Sigmoid colon (tissue), 7 donors: ENCODE measurements at regions of chr11 and their contacts with region 1.

Region 1: DNA sequence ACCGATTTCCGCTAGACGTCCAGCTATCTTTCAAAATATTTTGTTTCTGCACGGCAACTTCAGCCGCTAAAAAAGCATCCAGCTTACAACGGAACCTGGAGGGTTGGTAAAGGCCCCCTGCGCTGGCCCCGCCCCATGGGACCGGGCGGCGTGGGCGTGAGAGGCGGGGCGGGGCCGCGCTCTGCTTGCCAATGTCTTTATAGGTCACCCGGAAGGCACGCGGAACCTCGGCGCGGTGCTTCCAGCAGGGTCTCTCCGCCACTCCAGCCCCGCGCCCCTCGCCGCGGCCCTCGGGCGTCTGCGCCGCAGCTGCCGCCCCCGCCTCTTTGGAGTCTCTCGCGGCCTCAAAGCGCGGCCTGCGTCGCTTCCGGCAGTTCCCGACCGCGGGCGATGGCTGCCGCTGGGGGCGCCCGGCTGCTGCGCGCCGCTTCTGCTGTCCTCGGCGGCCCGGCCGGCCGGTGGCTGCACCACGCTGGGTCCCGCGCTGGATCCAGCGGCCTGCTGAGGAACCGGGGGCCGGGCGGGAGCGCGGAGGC is at the start of gene FDX1:
- DNase-seq: peak; percentile 87
- H3K4me3 ChIP-seq: peak within 1 kb of the TSS; percentile 55 to 80 (median 74)
- H3K27ac ChIP-seq: peak within 1 kb of the TSS; percentile 90 to 93 (median 92)
- H3K4me1 ChIP-seq: peaks cover 0 to 36% (median 26%) of the 10 kb centered on the region in 4 donors
- H3K27me3 ChIP-seq: no peaks in the 10 kb centered on the region
- CTCF ChIP-seq: peak in 2 of 4 experiments; percentile 34 to 71
- EP300 ChIP-seq: no peak
- POLR2A ChIP-seq: no peak
- total RNA-seq, gene FDX1: 12.5 to 13.8 (median 13.5) TPM

Region 2: DNA sequence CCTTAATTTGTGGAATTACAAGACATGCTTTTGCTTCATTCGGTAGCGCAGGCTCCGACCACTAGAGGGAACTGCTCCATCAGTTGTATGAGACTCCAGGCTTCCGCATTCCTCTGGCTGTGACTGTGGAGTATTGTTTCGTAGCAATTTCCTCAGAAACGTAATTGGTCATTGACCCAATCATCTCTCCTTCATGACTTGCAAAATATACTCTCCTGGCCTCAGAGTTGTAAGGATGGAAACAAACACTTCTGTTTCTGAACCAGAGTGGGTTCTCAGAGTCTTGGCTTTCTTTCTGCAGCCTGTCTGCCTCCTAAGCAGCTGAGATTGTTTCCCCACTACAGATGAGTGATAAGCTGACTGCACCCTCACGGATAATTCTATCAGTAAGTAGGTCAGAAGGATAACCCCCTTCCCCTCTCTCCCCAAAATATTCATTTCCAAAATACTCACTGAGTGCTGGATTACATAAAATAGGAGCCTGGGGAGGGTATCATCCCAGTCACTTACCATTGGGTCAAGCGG is 483.4 kb before region 1 on chr11:
- intact Hi-C with region 1: loop called (anchors 5 kb)
- DNase-seq: peak; percentile 89
- H3K4me3 ChIP-seq: peak overlapping the region in 3 of 4 donors; percentile 20 to 38 (median 38)
- H3K27ac ChIP-seq: peak overlapping the region; percentile 54 to 62 (median 58)
- H3K4me1 ChIP-seq: peaks cover 0 to 5% (median 2%) of the 10 kb centered on the region in 4 donors
- H3K27me3 ChIP-seq: no peaks in the 10 kb centered on the region
- CTCF ChIP-seq: peak; percentile 74 to 89 (median 85)
- EP300 ChIP-seq: no peak
- POLR2A ChIP-seq: no peak

Region 3: DNA sequence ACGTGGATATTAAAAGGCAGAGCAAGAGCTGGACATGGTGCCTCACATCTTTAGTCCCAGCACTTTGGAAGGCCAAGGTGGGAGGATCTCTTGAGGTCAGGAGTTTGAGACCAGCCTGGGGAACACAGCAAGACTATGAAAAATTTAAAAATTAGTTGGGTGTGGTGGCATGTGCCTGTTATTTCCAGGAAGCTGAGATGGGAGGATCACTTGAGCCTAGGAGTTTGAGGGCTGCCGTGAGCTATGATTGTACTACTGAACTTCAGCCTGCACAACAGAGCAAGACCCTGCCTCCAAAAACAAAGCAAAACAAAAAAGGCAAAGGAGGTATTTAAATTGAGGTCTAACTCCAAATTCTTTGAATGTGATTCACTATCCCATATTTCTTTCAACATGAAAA is 156.9 kb before region 1 on chr11:
- intact Hi-C with region 1: no loop called
- DNase-seq: no peak
- H3K4me3 ChIP-seq: no peak overlapping the region
- H3K27ac ChIP-seq: no peak overlapping the region
- H3K4me1 ChIP-seq: no peaks in the 10 kb centered on the region
- H3K27me3 ChIP-seq: no peaks in the 10 kb centered on the region
- CTCF ChIP-seq: no peak
- EP300 ChIP-seq: no peak
- POLR2A ChIP-seq: no peak

Region 4: DNA sequence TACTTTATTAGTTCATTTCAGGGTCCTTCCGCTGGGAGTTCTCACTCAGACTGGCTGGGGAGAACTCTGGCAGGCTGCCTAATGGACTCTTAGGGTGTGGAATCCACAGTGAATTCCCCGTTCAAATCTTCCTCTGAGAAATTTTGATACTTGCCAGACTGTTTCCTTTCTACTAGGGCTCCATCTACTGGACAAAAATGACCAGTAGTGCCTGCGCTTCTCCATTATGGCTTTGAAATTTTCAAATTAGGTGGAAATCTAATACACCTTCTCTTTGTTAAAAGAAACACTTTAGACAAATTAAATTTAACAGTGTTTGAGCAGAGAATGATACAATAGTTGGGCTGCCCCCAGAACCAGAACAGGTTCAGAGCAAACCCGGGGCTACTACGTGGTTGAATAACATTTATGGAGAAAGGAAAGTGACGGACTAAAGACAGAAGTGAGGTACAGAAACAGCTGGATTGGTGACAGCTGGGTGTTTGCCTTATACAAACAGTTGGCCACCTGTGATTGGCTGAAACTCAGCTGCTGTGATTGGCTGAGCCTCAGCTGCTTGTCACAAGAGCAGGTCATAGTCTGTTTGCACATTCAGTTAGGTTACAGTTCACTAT is 53.0 kb before region 1 on chr11:
- intact Hi-C with region 1: loop called (anchors 2 kb)
- DNase-seq: peak; percentile 87
- H3K4me3 ChIP-seq: peak overlapping the region in 2 of 4 donors; percentile 14 to 30
- H3K27ac ChIP-seq: peak overlapping the region; percentile 21 to 63 (median 49)
- H3K4me1 ChIP-seq: peaks cover 0 to 12% (median 5%) of the 10 kb centered on the region in 4 donors
- H3K27me3 ChIP-seq: no peaks in the 10 kb centered on the region
- CTCF ChIP-seq: peak; percentile 52 to 76 (median 60)
- EP300 ChIP-seq: no peak
- POLR2A ChIP-seq: no peak